ENCODE measurements at regions of chr10 and their contacts with region 1.

Region 1: DNA sequence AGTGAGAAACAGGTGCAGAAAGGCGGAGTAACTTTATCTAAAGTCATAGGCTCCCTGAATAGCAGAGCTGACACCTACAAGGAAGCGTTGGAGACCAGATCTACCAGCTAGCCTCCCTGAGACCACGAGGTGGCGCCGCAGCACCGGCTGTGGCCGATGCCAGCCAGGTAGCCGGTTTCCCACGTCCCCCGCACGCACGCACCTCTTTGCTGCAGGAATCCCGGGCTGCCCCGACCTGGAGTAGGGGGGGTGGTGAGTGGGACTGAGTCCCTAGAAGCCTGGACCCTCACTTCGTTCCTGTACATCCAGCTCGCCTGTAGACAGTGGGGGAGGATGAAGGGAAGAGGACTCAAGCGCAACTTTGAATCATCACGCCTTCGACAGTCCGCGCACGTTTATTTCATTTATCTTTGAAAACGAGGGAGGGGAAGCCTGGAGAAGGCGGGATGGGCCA is 3.7 kb downstream of the ELOVL3 start:
- DNase-seq: peak; percentile 93
- ATAC-seq: peak; percentile 44
- H3K4me3 Mint-ChIP-seq: peak overlapping the region; percentile 80
- H3K27ac Mint-ChIP-seq: no peak overlapping the region
- H3K4me1 Mint-ChIP-seq: peaks cover 18% of the 10 kb centered on the region
- H3K27me3 Mint-ChIP-seq: peaks cover 50% of the 10 kb centered on the region

Region 2: GRCh38 chr10:102352066-102352715 is 122.4 kb after region 1 on chr10:
- POLR2A ChIA-PET with region 1: interaction called, 17 read pairs
- DNase-seq: peak; percentile 64
- ATAC-seq: peak; percentile 72
- H3K4me3 Mint-ChIP-seq: no peak overlapping the region
- H3K27ac Mint-ChIP-seq: no peak overlapping the region
- H3K4me1 Mint-ChIP-seq: peaks cover 3% of the 10 kb centered on the region
- H3K27me3 Mint-ChIP-seq: no peaks in the 10 kb centered on the region